HAP-1 (cell line): ENCODE measurements at regions of chr17 and their contacts with region 1.

Region 1: GRCh38 chr17:7239091-7240027 is at the start of gene PHF23:
- DNase-seq: peak; percentile 99
- H3K4me3 ChIP-seq: peak within 1 kb of the TSS; percentile 95
- H3K4me1 ChIP-seq: peaks cover 23% of the 10 kb centered on the region
- H3K27me3 ChIP-seq: no peaks in the 10 kb centered on the region

Region 2: DNA sequence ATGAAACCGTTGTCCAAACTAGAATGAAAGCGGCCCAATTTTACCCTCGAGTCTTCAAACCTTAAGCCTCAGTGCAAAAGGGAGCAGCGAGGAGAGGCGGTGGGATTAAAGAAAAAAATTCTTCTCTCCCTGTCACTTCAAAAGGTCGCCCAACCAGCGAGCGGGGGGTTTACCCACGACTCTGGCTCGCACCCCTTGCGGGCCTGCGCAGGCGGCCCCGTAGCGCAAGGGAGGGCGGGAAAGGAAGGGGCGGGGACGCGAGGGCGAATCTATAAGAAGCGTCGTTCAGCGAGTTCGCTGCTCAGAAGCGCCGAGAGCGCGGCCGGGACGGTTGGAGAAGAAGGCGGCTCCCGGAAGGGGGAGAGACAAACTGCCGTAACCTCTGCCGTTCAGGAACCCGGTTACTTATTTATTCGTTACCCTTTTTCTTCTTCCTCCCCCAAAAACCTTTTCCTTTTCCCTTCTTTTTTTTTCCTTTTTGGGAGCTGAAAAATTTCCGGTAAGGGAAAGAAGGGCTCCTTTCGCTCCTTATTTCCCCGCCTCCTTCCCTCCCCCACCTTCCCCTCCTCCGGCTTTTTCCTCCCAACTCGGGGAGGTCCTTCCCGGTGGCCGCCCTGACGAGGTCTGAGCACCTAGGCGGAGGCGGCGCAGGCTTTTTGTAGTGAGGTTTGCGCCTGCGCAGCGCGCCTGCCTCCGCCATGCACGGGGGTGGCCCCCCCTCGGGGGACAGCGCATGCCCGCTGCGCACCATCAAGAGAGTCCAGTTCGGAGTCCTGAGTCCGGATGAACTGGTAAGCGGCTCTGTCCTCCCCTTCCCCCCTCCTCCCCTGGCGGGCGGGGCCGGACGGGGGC is 244.9 kb after region 1 on chr17 and contains the start of gene POLR2A:
- in situ Hi-C with region 1: loop called (anchors 10 kb)
- DNase-seq: peak; percentile 94 to 97
- H3K4me3 ChIP-seq: peak within 1 kb of the TSS; percentile 60
- H3K4me1 ChIP-seq: peaks cover 24% of the 10 kb centered on the region
- H3K27me3 ChIP-seq: no peaks in the 10 kb centered on the region

Region 3: DNA sequence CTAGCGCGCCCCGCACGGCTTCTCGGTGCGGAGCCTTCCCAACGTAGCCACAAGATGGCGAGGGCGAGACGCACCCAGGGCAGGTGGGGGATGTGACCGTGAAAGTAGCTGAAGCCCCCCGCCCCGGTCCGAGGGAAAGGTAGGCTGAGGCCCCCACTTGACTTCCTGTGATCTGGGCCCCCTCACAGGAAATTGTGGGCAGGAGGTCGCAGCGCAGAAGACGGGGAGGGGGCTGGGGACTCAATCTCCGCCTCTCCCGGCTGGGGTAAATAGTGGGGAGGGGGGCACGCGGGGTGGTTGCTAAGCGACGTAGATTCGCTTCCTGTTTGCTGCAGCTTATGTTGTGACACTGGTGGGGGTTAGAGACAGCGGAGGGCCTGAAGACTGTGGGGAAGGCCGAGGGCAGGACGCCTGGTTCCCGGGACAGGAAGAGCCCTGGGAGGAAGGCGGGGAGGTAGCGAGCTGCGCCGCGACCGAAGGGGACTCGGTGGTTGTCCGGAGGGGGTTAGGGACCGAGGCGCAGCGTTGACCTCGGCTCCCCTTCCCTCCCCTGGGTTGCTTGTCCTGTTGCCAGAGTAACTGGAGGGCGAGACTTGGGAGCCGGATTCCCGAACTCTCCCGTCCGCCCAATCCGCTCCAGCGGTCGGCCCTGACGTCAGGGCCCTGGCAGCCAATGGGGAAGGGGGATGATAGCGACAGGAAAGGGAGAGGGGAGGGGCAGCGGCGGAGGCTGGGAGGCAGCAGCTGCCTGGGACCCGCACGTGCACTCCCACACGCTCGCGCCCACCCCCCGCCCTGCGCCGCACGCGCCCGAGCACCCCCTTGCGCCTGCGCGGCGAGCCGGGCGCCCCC is 595.8 kb after region 1 on chr17:
- in situ Hi-C with region 1: no loop called
- DNase-seq: peak; percentile 96 to 99
- H3K4me3 ChIP-seq: peak overlapping the region; percentile 55
- H3K4me1 ChIP-seq: peaks cover 28% of the 10 kb centered on the region
- H3K27me3 ChIP-seq: no peaks in the 10 kb centered on the region

Region 4: GRCh38 chr17:7846773-7847661 is 607.7 kb after region 1 on chr17:
- in situ Hi-C with region 1: no loop called
- DNase-seq: no peak
- H3K4me3 ChIP-seq: no peak overlapping the region
- H3K4me1 ChIP-seq: peaks cover 5% of the 10 kb centered on the region; the same call in 1 of the 2 replicates
- H3K27me3 ChIP-seq: no peaks in the 10 kb centered on the region

Region 5: GRCh38 chr17:8156246-8156992 is 917.1 kb after region 1 on chr17:
- in situ Hi-C with region 1: loop called (anchors 25 kb)
- DNase-seq: peak; percentile 100
- H3K4me3 ChIP-seq: peak overlapping the region; percentile 48
- H3K4me1 ChIP-seq: peaks cover 45% of the 10 kb centered on the region
- H3K27me3 ChIP-seq: no peaks in the 10 kb centered on the region